GM23248 (cell line): ENCODE measurements at regions of chr2 and their contacts with region 1.

Region 1: DNA sequence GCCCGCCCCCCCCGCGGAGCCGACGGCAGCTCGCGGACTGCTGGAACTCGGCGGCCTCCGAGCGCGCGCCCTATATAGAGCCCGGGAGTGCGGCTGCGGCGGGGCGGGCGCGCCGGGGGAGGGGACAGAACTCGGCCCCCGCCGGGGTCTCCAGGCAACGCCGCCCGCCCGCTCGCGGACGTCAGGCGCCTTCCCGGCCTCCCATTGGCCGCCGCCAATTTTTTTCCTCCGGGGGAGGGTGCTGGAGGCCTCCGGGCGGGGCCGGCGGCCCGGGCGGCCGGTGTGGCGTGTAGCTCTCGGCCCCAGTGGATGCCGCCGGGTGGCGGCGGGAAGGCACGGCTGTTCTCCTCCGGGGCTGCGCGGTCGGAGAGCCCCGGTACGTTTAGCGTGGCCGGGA is at the start of gene ZFP36L2:
- DNase-seq: peak; percentile 98
- H3K4me3 ChIP-seq: peak within 1 kb of the TSS; percentile 97
- H3K27ac ChIP-seq: peak within 1 kb of the TSS; percentile 93
- H3K4me1 ChIP-seq: peaks cover 23% of the 10 kb centered on the region
- H3K27me3 ChIP-seq: no peaks in the 10 kb centered on the region
- total RNA-seq, gene ZFP36L2: 13.8 and 14.4 TPM in 2 replicates

Region 2: GRCh38 chr2:42974721-42975717 is 251.5 kb before region 1 on chr2:
- in situ Hi-C with region 1: loop called (anchors 10 kb)
- DNase-seq: peak; percentile 83
- H3K4me3 ChIP-seq: peak overlapping the region; percentile 66
- H3K27ac ChIP-seq: peak overlapping the region; percentile 64
- H3K4me1 ChIP-seq: peaks cover 42% of the 10 kb centered on the region
- H3K27me3 ChIP-seq: no peaks in the 10 kb centered on the region

Region 3: GRCh38 chr2:43131024-43131889 is 95.3 kb before region 1 on chr2:
- in situ Hi-C with region 1: no loop called
- DNase-seq: peak; percentile 97
- H3K4me3 ChIP-seq: no peak overlapping the region
- H3K27ac ChIP-seq: no peak overlapping the region
- H3K4me1 ChIP-seq: peaks cover 19% of the 10 kb centered on the region
- H3K27me3 ChIP-seq: no peaks in the 10 kb centered on the region

Region 4: DNA sequence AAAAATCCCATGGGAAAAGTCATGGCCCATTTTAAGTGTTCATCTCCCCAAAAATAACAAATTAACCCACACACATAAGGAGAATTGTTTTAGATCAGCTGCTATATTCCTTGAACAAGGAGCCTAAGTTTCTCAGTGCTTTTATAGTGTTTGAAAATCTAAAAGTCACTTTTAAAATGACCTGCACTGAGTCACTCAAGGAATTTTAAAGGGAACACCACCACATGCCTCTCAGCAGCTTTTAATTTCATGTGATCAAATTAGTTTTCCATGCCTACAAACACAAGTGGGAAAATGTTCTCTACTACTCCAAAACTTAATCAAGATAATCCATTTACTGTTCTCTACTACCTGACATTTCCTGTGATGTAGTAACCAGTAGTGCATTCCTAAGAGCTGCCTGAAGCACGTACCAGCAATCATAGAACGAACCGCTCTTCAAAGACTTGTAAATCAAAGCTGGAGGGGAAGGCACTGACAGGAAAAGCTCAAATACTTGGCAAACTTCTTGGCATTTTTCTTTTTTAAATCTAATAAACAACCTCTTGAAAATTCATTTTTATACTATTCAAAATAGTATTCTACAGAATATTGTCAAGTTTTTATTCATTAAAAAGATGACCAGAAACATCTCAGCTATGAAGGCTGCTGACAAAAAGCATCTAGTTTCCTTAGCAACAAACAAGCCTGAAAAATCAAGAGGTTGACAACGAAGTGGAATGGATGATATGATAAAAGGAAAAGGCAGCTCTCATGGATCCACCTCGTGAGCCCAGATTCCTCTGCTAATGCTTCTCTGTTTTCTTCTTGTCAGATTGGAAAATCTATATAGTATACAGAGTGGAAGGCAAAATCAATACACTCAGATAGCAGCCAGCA is 732.1 kb after region 1 on chr2:
- in situ Hi-C with region 1: no loop called
- DNase-seq: no peak
- H3K4me3 ChIP-seq: no peak overlapping the region
- H3K27ac ChIP-seq: no peak overlapping the region
- H3K4me1 ChIP-seq: no peaks in the 10 kb centered on the region
- H3K27me3 ChIP-seq: no peaks in the 10 kb centered on the region